Right cardiac atrium (tissue), 5 donors: ENCODE measurements at regions of chr15 and their contacts with region 1.

Region 1: GRCh38 chr15:87792250-87793040 is 464.1 kb downstream of the NTRK3 start:
- DNase-seq: no peak
- ATAC-seq: no peak
- H3K4me3 ChIP-seq: no peak overlapping the region
- H3K27ac ChIP-seq: no peak overlapping the region
- H3K4me1 ChIP-seq: no peaks in the 10 kb centered on the region
- H3K27me3 ChIP-seq: no peaks in the 10 kb centered on the region

Region 2: DNA sequence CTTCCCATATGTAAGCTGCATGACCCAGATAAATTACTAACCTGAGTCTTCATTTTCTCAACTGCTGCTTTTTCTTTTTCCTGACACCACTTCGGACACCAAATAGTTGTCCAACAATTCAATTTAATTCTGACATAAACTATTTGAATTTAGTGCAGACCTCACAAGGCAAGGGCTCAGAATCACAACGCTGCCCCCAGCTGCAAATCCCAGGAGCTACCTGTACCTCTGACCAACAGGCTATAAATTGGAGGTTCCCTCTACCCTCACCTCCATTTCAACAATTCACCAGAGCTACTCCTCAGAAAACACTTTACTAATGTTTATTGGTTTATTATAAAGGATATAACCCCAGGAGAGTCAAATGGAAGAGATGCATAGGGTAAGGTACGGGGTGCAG is 273.5 kb before region 1 on chr15:
- intact Hi-C with region 1: no loop called
- DNase-seq: no peak
- ATAC-seq: no peak
- H3K4me3 ChIP-seq: no peak overlapping the region
- H3K27ac ChIP-seq: no peak overlapping the region
- H3K4me1 ChIP-seq: no peaks in the 10 kb centered on the region
- H3K27me3 ChIP-seq: no peaks in the 10 kb centered on the region

Region 3: DNA sequence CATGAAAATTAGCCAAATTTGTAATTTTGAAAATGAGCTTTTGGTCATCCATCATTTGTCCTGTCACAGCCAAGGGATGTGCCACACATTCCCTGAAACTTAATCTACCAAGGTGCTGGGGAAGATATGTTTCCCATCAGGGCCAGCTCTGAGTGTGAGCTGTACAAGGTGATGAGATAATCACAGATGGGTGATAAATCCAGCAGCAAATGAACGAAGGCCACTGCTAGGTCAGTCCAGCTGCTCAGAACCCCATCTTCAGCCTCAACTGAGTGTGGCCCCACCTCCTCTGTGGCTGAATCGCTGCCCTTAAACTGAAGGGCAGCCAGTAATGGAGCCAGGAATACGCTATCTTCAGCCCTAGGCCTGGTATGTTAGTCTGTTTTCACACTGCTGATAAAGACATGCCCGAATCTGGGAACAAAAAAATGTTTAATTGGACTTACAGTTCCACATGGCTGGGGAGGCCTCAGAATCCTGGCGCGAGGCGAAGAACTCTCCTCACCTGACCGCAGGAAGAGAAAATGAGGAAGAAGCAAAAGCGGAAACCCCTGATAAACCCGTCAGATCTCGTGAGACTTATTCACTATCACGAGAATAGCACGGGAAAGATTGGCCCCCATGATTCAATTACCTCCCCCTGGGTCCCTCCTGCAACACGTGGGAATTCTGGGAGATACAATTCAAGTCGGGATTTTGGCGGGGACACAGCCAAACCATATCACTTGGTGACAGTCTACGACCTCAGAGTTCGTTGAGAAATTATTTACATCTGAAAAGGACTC is 88.9 kb before region 1 on chr15:
- intact Hi-C with region 1: no loop called
- DNase-seq: peak in 1 of 3 donors; percentile 41
- ATAC-seq: no peak
- H3K4me3 ChIP-seq: no peak overlapping the region
- H3K27ac ChIP-seq: no peak overlapping the region
- H3K4me1 ChIP-seq: no peaks in the 10 kb centered on the region
- H3K27me3 ChIP-seq: no peaks in the 10 kb centered on the region

Region 4: DNA sequence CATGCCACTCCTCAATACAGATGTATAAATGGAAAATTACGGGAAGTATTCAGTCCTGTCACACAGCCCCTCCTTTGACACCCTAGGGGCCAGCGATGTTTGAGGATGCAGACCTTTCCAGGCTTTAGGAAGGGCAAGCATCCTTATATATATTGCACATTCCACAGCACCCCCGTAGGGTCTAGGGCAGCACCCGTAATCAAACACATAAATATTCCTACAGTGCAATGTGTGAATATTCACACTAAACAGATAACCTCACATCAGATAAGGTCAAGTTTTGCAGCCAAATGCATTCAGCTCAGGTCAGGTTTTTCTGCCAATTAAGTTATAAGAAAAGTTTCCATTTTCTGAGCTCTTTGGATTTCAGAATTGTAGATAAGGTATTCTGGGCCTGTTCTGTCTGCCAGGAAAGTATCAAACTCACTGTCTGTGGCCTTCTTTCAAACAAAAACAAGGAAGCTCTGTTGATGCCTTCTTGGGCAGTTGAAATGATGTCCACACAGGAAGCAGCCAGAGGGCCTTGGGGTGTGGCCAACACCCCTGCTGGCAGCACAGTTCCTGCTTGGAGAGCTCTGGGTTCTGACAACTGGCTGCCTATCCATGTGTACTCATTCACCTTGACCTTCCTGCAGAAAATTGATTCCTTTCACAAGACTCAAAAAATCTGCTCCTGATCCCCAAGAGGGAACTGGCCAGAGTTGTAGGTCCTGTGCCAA is 37.0 kb after region 1 on chr15:
- intact Hi-C with region 1: loop called in 1 of 4 experiments (anchors 2 kb)
- DNase-seq: peak; percentile 44 to 81 (median 81)
- ATAC-seq: peak; percentile 76 to 85
- H3K4me3 ChIP-seq: no peak overlapping the region
- H3K27ac ChIP-seq: no peak overlapping the region
- H3K4me1 ChIP-seq: no peaks in the 10 kb centered on the region
- H3K27me3 ChIP-seq: no peaks in the 10 kb centered on the region

Region 5: GRCh38 chr15:88144921-88145653 is 352.6 kb after region 1 on chr15:
- intact Hi-C with region 1: no loop called
- DNase-seq: no peak
- ATAC-seq: no peak
- H3K4me3 ChIP-seq: no peak overlapping the region
- H3K27ac ChIP-seq: no peak overlapping the region
- H3K4me1 ChIP-seq: no peaks in the 10 kb centered on the region
- H3K27me3 ChIP-seq: no peaks in the 10 kb centered on the region